PC-3 (cell line): ENCODE measurements at regions of chr6 and their contacts with region 1.

Region 1: DNA sequence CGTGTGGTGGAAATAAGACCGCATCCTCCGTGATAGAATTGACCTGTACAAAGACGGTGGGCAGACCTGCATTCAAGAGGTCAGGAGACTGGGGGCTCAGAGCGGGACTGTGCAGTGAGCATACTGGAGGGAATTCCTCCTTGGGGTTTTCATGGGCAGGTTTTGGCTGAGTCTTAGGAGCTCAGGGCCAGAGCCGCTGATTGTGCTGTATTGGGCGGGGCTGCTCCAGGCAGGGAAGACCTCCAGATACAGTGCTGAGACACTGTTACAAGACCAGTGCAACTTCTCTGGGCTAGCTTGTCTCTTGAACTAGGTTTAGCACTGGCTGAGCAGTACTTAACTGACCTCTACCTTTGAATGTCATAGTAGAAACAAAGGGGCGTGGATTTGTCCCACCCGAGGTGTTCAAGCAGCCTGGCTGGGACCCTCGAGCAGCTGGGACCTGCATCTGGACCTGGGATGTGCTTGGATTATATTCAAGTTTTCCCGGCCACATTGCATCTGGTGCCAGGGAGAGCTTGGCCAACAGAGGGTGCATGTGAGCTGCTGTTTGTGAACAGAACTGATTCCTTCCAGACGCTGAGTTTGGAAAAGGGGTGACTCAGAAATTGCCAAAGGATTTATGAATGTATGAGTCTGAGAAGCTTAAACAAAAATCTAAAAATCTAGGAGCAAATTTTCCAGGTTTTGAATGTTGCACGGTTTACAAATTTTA is 33.4 kb upstream of the SLC22A1 start:
- DNase-seq: peak; percentile 78
- ATAC-seq: peak; percentile 89
- H3K4me3 ChIP-seq: no peak overlapping the region
- H3K27ac ChIP-seq: 0 out of 2 replicates have a peak overlapping the region, but pooled peaks have one; percentile 8
- H3K4me1 ChIP-seq: peaks cover 4% of the 10 kb centered on the region
- H3K27me3 ChIP-seq: no peaks in the 10 kb centered on the region
- CTCF ChIP-seq: peak; percentile 81

Region 2: DNA sequence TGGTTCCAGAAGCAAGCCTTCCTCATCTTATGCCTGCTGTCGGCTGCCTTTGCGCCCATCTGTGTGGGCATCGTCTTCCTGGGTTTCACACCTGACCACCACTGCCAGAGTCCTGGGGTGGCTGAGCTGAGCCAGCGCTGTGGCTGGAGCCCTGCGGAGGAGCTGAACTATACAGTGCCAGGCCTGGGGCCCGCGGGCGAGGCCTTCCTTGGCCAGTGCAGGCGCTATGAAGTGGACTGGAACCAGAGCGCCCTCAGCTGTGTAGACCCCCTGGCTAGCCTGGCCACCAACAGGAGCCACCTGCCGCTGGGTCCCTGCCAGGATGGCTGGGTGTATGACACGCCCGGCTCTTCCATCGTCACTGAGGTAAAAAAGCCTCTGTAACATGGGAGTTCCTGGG is 33.8 kb after region 1 on chr6:
- CTCF ChIA-PET with region 1: no interaction called
- POLR2A ChIA-PET with region 1: no interaction called
- intact Hi-C with region 1: no loop called
- DNase-seq: no peak
- ATAC-seq: no peak
- H3K4me3 ChIP-seq: no peak overlapping the region
- H3K27ac ChIP-seq: no peak overlapping the region
- H3K4me1 ChIP-seq: no peaks in the 10 kb centered on the region
- H3K27me3 ChIP-seq: no peaks in the 10 kb centered on the region
- CTCF ChIP-seq: no peak

Region 3: DNA sequence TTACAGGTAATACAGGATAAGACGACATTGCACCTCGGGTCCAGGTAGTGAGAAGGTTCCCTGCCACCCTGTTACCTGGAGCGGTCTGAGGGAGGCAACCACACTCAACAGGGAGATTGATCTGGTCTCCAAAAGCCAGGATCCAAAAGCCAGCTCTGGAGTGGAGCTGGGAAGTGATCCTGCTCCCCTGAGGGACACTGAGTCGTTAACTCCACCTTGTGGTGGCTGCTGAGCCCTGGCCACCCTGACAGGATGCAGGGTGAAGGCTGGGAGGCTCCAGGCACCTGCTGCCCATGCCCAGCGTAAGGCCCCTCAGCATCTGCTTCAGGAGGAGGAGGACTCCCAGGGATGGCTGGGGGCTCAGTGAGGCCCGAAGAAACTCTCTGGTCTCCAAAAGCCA is 209.1 kb after region 1 on chr6:
- CTCF ChIA-PET with region 1: interaction called, 3 read pairs
- POLR2A ChIA-PET with region 1: no interaction called
- intact Hi-C with region 1: loop called (anchors 5 kb)
- DNase-seq: peak; percentile 51
- ATAC-seq: peak; percentile 87
- H3K4me3 ChIP-seq: no peak overlapping the region
- H3K27ac ChIP-seq: no peak overlapping the region
- H3K4me1 ChIP-seq: peaks cover 3% of the 10 kb centered on the region; the same call in 1 of the 2 replicates
- H3K27me3 ChIP-seq: no peaks in the 10 kb centered on the region
- CTCF ChIP-seq: peak; percentile 46

Region 4: GRCh38 chr6:160455541-160456213 is 367.5 kb after region 1 on chr6:
- CTCF ChIA-PET with region 1: interaction called, 6 read pairs
- POLR2A ChIA-PET with region 1: interaction called, 4 read pairs
- intact Hi-C with region 1: loop called (anchors 1 kb)
- DNase-seq: peak; percentile 64
- ATAC-seq: peak; percentile 78
- H3K4me3 ChIP-seq: no peak overlapping the region
- H3K27ac ChIP-seq: no peak overlapping the region
- H3K4me1 ChIP-seq: peaks cover 15% of the 10 kb centered on the region
- H3K27me3 ChIP-seq: no peaks in the 10 kb centered on the region
- CTCF ChIP-seq: peak; percentile 91

Region 5: GRCh38 chr6:160534050-160534696 is 445.9 kb after region 1 on chr6:
- CTCF ChIA-PET with region 1: no interaction called
- POLR2A ChIA-PET with region 1: no interaction called
- intact Hi-C with region 1: loop called (anchors 1 kb)
- DNase-seq: peak; percentile 70
- ATAC-seq: peak; percentile 82
- H3K4me3 ChIP-seq: peak overlapping the region; percentile 68
- H3K27ac ChIP-seq: no peak overlapping the region
- H3K4me1 ChIP-seq: no peaks in the 10 kb centered on the region; the same call in 1 of the 2 replicates
- H3K27me3 ChIP-seq: 0 out of 2 replicates have a peak, but pooled peaks cover 4% of the 10 kb centered on the region
- CTCF ChIP-seq: peak; percentile 93